PC-3 (cell line): ENCODE measurements at regions of chr15 and their contacts with region 1.

Region 1: GRCh38 chr15:84633311-84634227 is 20.5 kb downstream of the WDR73 start:
- DNase-seq: peak; percentile 76
- ATAC-seq: peak; percentile 60
- H3K4me3 ChIP-seq: peak overlapping the region; percentile 93
- H3K27ac ChIP-seq: peak overlapping the region; percentile 20; the same call in 1 of the 2 replicates
- H3K4me1 ChIP-seq: peaks cover 27% of the 10 kb centered on the region
- H3K27me3 ChIP-seq: no peaks in the 10 kb centered on the region
- CTCF ChIP-seq: no peak

Region 2: DNA sequence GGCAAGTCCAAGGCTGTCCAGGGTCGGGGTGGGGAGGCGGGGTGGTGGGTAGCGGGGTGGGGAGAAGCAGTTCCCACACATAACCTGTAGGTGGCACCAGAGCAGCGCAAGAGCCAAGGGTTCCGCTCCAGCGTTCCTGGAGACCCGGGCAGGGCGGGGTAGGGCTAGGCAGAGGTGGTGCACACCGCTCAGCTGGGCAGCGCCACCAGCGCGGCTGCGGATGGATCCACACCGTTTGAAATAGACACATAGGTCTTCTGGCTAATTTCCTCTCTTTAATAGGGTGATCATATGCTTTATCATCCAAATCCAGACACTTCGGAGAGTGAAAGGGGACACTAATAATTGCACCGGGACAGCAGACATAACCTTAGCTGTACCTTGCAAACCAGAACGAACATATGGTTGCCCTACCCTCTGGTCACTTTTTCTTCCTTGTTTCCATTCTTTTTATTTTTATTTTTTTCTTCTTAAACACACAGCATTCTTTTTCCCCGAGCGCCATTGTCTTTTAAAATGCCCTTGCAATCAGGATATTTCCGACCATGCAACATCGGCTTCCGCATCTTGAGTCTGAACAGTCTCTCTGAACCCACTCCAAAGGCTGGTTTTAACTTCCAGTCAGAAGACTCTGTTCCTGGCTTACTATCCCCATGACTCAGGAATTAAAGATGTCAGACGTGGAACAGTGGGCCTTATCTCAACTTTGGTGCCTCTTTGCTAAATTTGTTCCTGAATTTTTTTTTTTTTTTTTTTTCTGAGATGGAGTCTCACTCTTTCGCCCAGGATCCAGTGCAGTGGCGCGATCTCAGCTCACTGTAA is 45.3 kb before region 1 on chr15:
- CTCF ChIA-PET with region 1: interaction called, 5 read pairs
- POLR2A ChIA-PET with region 1: no interaction called
- intact Hi-C with region 1: loop called (anchors 2 kb)
- DNase-seq: peak; percentile 91
- ATAC-seq: peak; percentile 100
- H3K4me3 ChIP-seq: peak overlapping the region; percentile 54
- H3K27ac ChIP-seq: no peak overlapping the region
- H3K4me1 ChIP-seq: no peaks in the 10 kb centered on the region; the same call in 1 of the 2 replicates
- H3K27me3 ChIP-seq: no peaks in the 10 kb centered on the region
- CTCF ChIP-seq: peak; percentile 61

Region 3: DNA sequence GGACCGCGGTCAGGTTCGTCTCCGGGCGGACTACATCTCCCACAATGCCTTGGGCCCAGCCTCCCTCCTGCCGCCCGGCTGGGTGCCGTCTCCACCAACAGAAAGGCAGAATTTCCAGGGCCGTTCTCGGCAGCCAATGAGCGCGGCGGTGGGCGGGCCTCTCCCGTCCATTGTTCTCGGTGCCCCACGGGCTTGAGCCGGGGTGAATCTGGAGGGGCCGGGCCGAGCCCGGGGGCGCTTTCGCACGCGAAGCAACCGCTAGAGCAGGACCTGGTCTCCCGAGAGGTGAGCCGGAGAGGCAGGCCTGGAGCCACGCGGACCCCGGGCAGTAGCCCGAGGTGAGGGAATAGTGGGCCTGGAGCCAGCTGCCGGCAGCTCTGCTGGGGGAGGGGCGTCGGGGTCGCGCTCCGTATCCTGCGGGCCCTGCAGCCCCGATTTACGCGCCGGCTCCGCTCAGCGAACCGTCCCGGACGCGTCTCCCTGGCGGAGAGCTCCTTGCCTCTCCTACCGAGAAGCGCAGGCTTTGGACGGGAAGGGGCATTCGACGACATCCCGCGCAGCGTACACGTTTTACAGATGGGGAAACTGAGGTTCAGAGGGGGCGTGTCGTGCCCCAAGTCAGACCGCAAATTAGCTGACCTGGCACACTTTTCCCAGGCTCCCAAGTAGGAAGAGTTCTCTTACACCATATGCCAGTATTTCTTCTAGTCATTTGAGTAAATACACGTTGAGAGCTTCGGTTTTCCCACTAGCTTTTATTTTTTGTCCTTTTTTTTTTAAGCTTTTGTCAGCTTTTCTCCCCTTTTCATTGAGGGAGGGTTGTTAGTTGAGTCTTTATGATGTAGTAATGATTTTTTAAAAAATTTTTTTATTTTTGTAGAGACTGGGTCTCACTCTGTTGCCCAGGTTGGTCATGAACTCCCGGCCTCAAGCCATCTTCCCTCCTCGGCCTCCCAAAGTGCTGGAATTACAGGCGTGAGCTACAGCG is 32.4 kb before region 1 on chr15 and contains the start of gene ZSCAN2:
- CTCF ChIA-PET with region 1: interaction called, 9 read pairs
- POLR2A ChIA-PET with region 1: interaction called, 6 read pairs
- intact Hi-C with region 1: loop called (anchors 1 kb)
- DNase-seq: peak; percentile 95
- ATAC-seq: peak; percentile 94
- H3K4me3 ChIP-seq: peak within 1 kb of the TSS; percentile 91
- H3K27ac ChIP-seq: peak within 1 kb of the TSS; percentile 34
- H3K4me1 ChIP-seq: peaks cover 8% of the 10 kb centered on the region; the same call in 1 of the 2 replicates
- H3K27me3 ChIP-seq: no peaks in the 10 kb centered on the region
- CTCF ChIP-seq: no peak
- total RNA-seq, gene ZSCAN2: 15.0 and 18.3 TPM in 2 replicates

Region 4: GRCh38 chr15:84621358-84621979 is 12.1 kb before region 1 on chr15:
- CTCF ChIA-PET with region 1: no interaction called
- POLR2A ChIA-PET with region 1: interaction called, 10 read pairs
- intact Hi-C with region 1: no loop called
- DNase-seq: no peak
- ATAC-seq: no peak
- H3K4me3 ChIP-seq: no peak overlapping the region
- H3K27ac ChIP-seq: no peak overlapping the region
- H3K4me1 ChIP-seq: no peaks in the 10 kb centered on the region
- H3K27me3 ChIP-seq: no peaks in the 10 kb centered on the region
- CTCF ChIP-seq: no peak

Region 5: DNA sequence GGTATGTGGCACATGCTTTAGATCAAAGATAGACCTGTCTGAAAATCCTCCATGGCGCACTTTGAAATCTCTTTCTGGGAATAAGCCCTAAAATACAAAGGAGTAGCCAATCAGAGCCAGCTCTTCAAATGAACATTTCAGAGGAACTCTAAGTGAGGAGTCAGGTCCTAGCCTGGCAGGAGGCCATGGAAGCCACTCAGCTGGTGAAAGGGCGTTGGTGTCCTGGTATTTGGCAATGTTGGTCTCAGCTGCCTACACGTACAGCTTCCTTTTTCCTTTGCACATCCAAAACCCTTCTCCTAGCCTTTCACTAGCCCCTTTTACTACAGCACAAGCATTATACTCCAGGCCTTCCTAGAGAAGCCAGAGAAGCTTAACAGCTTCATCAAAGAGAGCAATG is 15.0 kb after region 1 on chr15:
- CTCF ChIA-PET with region 1: no interaction called
- POLR2A ChIA-PET with region 1: no interaction called
- intact Hi-C with region 1: no loop called
- DNase-seq: no peak
- ATAC-seq: peak; percentile 48; the same call in 1 of the 2 replicates
- H3K4me3 ChIP-seq: no peak overlapping the region
- H3K27ac ChIP-seq: no peak overlapping the region
- H3K4me1 ChIP-seq: peaks cover 16% of the 10 kb centered on the region
- H3K27me3 ChIP-seq: no peaks in the 10 kb centered on the region
- CTCF ChIP-seq: no peak

Region 6: DNA sequence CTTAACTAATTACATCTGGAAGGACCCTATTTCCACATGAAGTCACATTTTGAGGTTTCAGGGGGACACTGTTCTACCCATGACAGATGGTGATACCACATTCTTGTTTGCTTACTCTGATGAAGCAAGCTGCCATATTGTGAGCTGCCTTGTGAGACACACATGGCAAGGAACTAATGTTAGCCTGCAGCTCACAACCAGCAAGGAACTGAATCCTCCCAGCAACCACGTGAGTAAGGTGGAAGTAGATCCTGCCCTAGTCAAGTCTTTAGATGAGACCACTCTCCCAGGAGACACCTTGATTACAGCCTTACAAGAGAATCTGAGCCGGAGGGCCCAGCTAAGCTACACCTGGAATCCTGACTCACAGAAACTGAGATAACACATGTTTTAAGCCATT is 508.2 kb after region 1 on chr15:
- CTCF ChIA-PET with region 1: no interaction called
- POLR2A ChIA-PET with region 1: no interaction called
- intact Hi-C with region 1: no loop called
- DNase-seq: no peak
- ATAC-seq: no peak
- H3K4me3 ChIP-seq: no peak overlapping the region
- H3K27ac ChIP-seq: no peak overlapping the region
- H3K4me1 ChIP-seq: peaks cover 16% of the 10 kb centered on the region
- H3K27me3 ChIP-seq: no peaks in the 10 kb centered on the region
- CTCF ChIP-seq: no peak